ENCODE measurements at regions of chr20 and their contacts with region 1.

Region 1: GRCh38 chr20:19497064-19497463 is 261.0 kb upstream of the RIN2 start:
- DNase-seq: no peak
- H3K4me3 ChIP-seq: no peak overlapping the region
- H3K27ac ChIP-seq: no peak overlapping the region
- H3K4me1 ChIP-seq: peaks cover 0 to 4% of the 10 kb centered on the region in 2 donors
- H3K27me3 ChIP-seq: no peaks in the 10 kb centered on the region
- CTCF ChIP-seq: no peak
- POLR2A ChIP-seq: no peak

Region 2: DNA sequence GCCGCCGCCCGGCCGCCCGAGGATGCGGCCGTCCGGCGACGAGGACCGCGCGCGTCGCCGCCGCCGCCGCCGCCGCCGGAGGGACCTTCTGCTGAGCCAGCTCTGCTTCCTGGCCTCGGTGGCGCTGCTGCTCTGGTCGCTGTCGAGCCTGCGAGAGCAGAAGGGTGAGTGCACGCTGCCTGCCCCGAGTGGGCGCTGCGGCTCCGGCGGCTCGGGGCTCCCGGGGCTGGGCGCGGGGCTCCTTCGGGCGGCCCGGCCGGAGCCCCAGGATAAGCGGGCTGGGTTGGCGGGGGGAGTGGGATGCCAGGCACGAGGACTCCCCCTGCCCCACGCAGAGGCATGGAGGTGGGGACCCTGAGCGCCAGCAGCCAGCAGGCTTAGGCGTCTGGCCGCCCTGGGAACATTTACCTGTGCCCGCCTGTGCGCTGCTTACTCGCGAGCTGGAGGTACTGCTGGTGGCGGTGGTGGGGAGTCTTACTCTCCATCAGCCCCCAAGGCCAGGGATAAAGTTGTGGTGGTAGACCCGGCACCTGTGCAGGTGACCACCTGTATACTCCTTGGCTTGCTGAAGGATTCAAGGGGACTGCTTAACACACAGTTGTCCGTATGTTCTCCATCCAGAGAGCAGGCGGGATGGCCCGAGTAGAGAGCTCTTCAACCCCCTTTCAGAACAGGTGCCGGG is 284.1 kb before region 1 on chr20:
- intact Hi-C with region 1: loop called in 1 of 2 experiments (anchors 10 kb)
- DNase-seq: peak; percentile 72 to 87 (median 81)
- H3K4me3 ChIP-seq: peak overlapping the region in 1 of 4 donors; percentile 68
- H3K27ac ChIP-seq: peak overlapping the region in 2 of 5 donors; percentile 49 to 61
- H3K4me1 ChIP-seq: peaks cover 13 to 15% of the 10 kb centered on the region in 2 donors
- H3K27me3 ChIP-seq: peaks cover 8% of the 10 kb centered on the region
- CTCF ChIP-seq: peak in 5 of 6 experiments; percentile 20 to 63 (median 52)
- POLR2A ChIP-seq: no peak

Region 3: DNA sequence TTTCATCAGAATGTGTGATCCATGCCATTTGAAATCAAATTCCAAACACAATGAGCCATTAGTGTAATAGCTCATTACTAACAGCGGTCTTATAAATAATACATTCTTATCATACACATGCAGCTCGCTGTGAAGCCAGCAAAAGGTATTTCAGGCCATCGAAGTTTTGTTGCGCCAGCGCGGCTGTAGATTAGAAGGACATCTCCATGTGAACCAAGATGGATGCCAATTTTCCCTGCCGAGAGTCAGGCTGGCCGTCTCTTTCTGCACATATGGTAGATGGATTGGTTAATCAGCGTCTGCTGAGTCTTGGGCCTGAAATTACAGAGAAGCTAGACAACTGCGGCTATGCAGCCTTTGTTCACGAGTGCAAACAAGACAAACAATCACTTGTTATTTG is 599.4 kb after region 1 on chr20:
- intact Hi-C with region 1: no loop called
- DNase-seq: no peak
- H3K4me3 ChIP-seq: no peak overlapping the region
- H3K27ac ChIP-seq: no peak overlapping the region
- H3K4me1 ChIP-seq: no peaks in the 10 kb centered on the region
- H3K27me3 ChIP-seq: no peaks in the 10 kb centered on the region
- CTCF ChIP-seq: no peak
- POLR2A ChIP-seq: no peak